ENCODE measurements at regions of chr21 and their contacts with region 1.

Region 1: DNA sequence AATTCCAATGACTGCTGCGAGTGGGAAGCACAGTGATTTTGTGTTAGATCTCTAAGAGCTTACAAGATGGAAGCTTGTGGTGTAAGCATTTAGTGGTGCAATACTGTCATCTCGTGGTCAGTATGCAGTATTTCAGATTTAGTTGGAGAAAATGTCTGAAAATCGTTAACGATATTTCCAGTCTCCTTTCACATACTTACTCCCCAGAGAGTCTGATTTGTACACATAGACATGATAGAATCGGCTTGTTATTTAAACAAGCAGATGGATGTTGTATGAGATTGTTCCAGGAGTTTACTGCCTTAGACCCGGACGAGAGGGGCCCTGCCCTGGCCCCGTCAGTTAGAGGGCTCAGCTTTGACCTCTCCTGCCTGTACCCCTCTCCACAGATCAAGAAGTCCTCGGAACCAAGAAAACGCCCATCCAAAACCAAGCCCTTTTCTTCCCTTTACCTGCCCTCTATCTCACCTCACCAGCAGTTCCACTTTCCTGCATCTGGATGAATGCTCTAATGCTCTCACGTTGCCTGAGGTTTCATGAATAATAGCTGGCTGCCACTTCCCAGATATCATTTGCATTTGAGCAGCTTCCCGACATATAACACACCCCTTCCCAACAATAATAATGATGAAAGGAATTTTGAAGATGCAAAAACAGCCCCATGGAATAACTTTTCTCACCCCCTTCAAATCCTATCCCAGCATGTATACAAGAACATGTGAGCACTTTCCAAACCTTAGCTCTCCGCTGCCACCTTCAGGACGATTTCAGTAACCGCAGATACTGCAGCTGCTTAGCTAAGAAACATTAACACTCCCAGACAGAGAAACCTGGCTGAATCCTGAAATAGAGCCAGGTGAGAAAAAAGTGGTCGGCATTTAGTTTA is 247.3 kb downstream of the LTN1 start:
- DNase-seq: peak; percentile 44 to 66
- H3K4me3 ChIP-seq: peak overlapping the region in 1 of 4 experiments; percentile 8; a peak in 1 of 8 replicates
- H3K27ac ChIP-seq: no peak overlapping the region
- H3K4me1 ChIP-seq: no peaks in the 10 kb centered on the region
- H3K27me3 ChIP-seq: no peaks in the 10 kb centered on the region
- CTCF ChIP-seq: peak in 2 of 3 experiments; percentile 77 to 86; a peak in 3 of 4 replicates
- EP300 ChIP-seq: no peak
- POLR2A ChIP-seq: no peak
- RAD21 ChIP-seq: peak; percentile 99 to 100

Region 2: GRCh38 chr21:26850108-26850643 is 1895.2 kb before region 1 on chr21:
- CTCF ChIA-PET with region 1: interaction called, 10 read pairs
- POLR2A ChIA-PET with region 1: interaction called, 8 read pairs
- DNase-seq: no peak
- H3K4me3 ChIP-seq: no peak overlapping the region
- H3K27ac ChIP-seq: no peak overlapping the region
- H3K4me1 ChIP-seq: peaks cover 0 to 14% (median 4%) of the 10 kb centered on the region in 4 experiments; a peak in 5 of 7 replicates
- H3K27me3 ChIP-seq: peaks cover 0 to 16% (median 6%) of the 10 kb centered on the region in 4 experiments; a peak in 4 of 7 replicates
- CTCF ChIP-seq: peak in 2 of 3 experiments; percentile 20 to 61; a peak in 2 of 4 replicates
- EP300 ChIP-seq: no peak
- POLR2A ChIP-seq: no peak
- RAD21 ChIP-seq: peak; percentile 62 to 65

Region 3: DNA sequence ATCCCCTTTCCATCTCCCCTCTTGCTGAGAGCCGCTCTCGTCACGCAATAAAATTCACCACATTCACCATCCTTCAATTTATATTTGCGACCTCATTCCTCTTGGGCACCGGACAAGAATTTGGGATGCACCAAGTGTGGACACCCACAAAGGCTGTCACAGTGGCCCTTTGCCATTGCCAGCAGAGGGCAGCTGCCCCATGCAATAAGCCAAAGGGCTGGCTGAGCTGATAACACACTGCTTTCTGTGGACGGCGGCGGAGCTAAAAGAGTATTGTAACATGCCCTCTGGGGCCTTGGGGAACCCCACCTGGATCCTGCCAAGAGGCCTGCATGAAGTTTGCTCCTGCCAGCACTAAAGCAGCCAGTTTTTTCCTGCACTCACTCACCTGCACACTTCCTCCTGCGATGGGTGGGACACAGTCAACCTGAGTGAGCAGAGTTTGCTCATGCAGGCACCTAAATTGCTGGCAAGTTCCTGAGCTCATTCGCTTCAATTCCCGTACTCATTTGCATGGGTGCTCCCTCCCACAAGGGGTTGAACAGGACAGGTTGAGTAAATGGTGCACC is 986.2 kb before region 1 on chr21:
- CTCF ChIA-PET with region 1: interaction called, 14 read pairs
- POLR2A ChIA-PET with region 1: no interaction called
- DNase-seq: peak; percentile 19 to 55
- H3K4me3 ChIP-seq: no peak overlapping the region
- H3K27ac ChIP-seq: no peak overlapping the region
- H3K4me1 ChIP-seq: peaks cover 0 to 4% (median 0%) of the 10 kb centered on the region in 4 experiments; a peak in 1 of 7 replicates
- H3K27me3 ChIP-seq: peaks cover 0 to 1% (median 0%) of the 10 kb centered on the region in 4 experiments; a peak in 1 of 7 replicates
- CTCF ChIP-seq: peak; percentile 66 to 74 (median 66)
- EP300 ChIP-seq: no peak
- POLR2A ChIP-seq: no peak
- RAD21 ChIP-seq: peak; percentile 81 to 82

Region 4: GRCh38 chr21:28345934-28346333 is 399.4 kb before region 1 on chr21:
- CTCF ChIA-PET with region 1: interaction called, 13 read pairs
- POLR2A ChIA-PET with region 1: no interaction called
- DNase-seq: no peak
- H3K4me3 ChIP-seq: no peak overlapping the region
- H3K27ac ChIP-seq: no peak overlapping the region; the same call in 1 of the 2 replicates
- H3K4me1 ChIP-seq: no peaks in the 10 kb centered on the region
- H3K27me3 ChIP-seq: no peaks in the 10 kb centered on the region
- CTCF ChIP-seq: no peak
- EP300 ChIP-seq: no peak
- POLR2A ChIP-seq: no peak
- RAD21 ChIP-seq: no peak

Region 5: GRCh38 chr21:28522014-28522799 is 223.2 kb before region 1 on chr21:
- CTCF ChIA-PET with region 1: interaction called, 40 read pairs
- POLR2A ChIA-PET with region 1: no interaction called
- DNase-seq: peak in 1 of 2 experiments; percentile 5
- H3K4me3 ChIP-seq: no peak overlapping the region
- H3K27ac ChIP-seq: no peak overlapping the region
- H3K4me1 ChIP-seq: 0 out of 7 replicates have a peak, but pooled peaks cover 0 to under 1% (median 0%) of the 10 kb centered on the region in 4 experiments
- H3K27me3 ChIP-seq: peaks cover 0 to 1% (median 0%) of the 10 kb centered on the region in 4 experiments; a peak in 1 of 7 replicates
- CTCF ChIP-seq: peak in 2 of 3 experiments; percentile 43 to 66; a peak in 2 of 4 replicates
- EP300 ChIP-seq: no peak
- POLR2A ChIP-seq: no peak
- RAD21 ChIP-seq: peak; percentile 73

Region 6: DNA sequence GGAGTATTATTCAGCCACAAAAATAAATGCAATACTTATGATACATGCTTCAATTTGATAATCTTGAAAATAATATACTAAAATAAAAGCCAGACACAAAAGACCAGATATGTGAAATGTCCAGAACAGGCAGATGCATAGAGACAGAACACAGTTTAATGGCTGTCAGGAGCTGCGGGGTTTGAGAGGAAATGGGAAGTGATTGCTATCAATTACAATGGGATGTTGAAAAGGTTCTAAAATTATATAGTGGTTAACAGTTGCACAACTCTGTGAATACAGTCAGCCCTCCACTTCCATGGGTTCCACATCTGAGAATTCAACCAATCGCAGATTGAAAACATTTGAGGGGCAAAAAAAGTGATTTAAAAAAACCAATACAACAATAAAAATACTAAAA is 193.4 kb after region 1 on chr21:
- CTCF ChIA-PET with region 1: interaction called, 24 read pairs
- POLR2A ChIA-PET with region 1: no interaction called
- DNase-seq: no peak
- H3K4me3 ChIP-seq: no peak overlapping the region
- H3K27ac ChIP-seq: no peak overlapping the region
- H3K4me1 ChIP-seq: no peaks in the 10 kb centered on the region
- H3K27me3 ChIP-seq: no peaks in the 10 kb centered on the region
- CTCF ChIP-seq: no peak
- EP300 ChIP-seq: no peak
- POLR2A ChIP-seq: no peak
- RAD21 ChIP-seq: no peak

Region 7: GRCh38 chr21:29073222-29074006 is 328.0 kb after region 1 on chr21 and contains the start of gene CCT8:
- CTCF ChIA-PET with region 1: no interaction called
- POLR2A ChIA-PET with region 1: no interaction called
- DNase-seq: peak; percentile 94 to 96
- H3K4me3 ChIP-seq: peak within 1 kb of the TSS; percentile 77 to 97 (median 88)
- H3K27ac ChIP-seq: peak within 1 kb of the TSS; percentile 84
- H3K4me1 ChIP-seq: peaks cover 0 to 5% (median 0%) of the 10 kb centered on the region in 4 experiments; a peak in 2 of 7 replicates
- H3K27me3 ChIP-seq: no peaks in the 10 kb centered on the region
- CTCF ChIP-seq: no peak
- EP300 ChIP-seq: no peak
- POLR2A ChIP-seq: peak; percentile 95 to 98
- RAD21 ChIP-seq: no peak
- total RNA-seq, gene CCT8: 314 and 319 TPM in 2 replicates

Measured in H1 (cell line).